H1 (cell line): ENCODE measurements at regions of chr15 and their contacts with region 1.

Region 1: DNA sequence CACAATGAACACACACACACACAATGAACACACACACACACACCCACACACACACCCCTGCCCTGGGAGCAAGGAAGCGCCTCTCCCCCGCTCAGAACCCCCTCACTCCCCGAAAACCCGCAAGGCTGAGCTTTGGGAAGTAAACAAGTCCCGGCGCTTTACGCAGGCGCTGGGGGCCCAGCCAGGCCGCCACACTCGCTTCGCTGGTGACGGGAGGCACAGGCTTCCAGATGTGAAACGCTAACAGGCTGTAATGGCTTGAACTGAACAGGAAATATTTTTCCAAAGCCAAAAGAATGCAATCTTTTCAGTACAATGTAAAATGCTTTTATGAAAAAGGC is 122.7 kb upstream of the IGF1R start:
- DNase-seq: no peak
- H3K4me3 ChIP-seq: no peak overlapping the region
- H3K27ac ChIP-seq: no peak overlapping the region
- H3K4me1 ChIP-seq: peaks cover 0 to 13% (median 2%) of the 10 kb centered on the region in 4 experiments; a peak in 5 of 7 replicates
- H3K27me3 ChIP-seq: no peaks in the 10 kb centered on the region
- CTCF ChIP-seq: no peak
- EP300 ChIP-seq: no peak
- POLR2A ChIP-seq: no peak
- RAD21 ChIP-seq: no peak

Region 2: DNA sequence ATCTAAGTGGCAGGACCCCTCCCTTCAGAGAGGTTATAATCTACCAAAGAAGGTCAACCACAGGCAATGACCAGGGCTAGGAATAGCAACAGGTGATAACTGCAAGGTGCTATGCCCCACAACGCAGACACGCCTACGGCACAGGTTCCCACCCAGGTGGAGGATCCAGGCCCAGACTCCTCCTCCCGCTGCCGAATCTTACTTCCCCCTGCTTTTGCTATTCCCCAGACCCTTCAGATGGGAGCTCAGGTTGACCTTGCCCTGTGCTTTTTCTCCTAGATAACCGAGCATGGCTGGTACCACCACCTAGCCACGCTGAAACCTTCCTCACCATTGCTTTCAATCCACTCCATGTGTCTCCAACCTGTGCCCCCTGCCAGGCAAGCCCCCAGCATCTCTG is 19.5 kb before region 1 on chr15:
- CTCF ChIA-PET with region 1: no interaction called
- POLR2A ChIA-PET with region 1: no interaction called
- DNase-seq: no peak
- H3K4me3 ChIP-seq: no peak overlapping the region
- H3K27ac ChIP-seq: no peak overlapping the region
- H3K4me1 ChIP-seq: no peaks in the 10 kb centered on the region
- H3K27me3 ChIP-seq: no peaks in the 10 kb centered on the region
- CTCF ChIP-seq: no peak
- EP300 ChIP-seq: no peak
- POLR2A ChIP-seq: no peak
- RAD21 ChIP-seq: no peak

Region 3: GRCh38 chr15:98548154-98548971 is 22.7 kb after region 1 on chr15:
- CTCF ChIA-PET with region 1: interaction called, 21 read pairs
- POLR2A ChIA-PET with region 1: no interaction called
- DNase-seq: peak; percentile 23 to 82
- H3K4me3 ChIP-seq: peak overlapping the region; percentile 47 to 61 (median 55)
- H3K27ac ChIP-seq: no peak overlapping the region
- H3K4me1 ChIP-seq: peaks cover 0 to 4% (median 4%) of the 10 kb centered on the region in 4 experiments; a peak in 6 of 7 replicates
- H3K27me3 ChIP-seq: peaks cover 0 to 10% (median 8%) of the 10 kb centered on the region in 4 experiments; a peak in 5 of 7 replicates
- CTCF ChIP-seq: peak; percentile 22 to 46 (median 40)
- EP300 ChIP-seq: no peak
- POLR2A ChIP-seq: no peak
- RAD21 ChIP-seq: peak; percentile 5 to 29; a peak in 3 of 4 replicates